Tibial artery (tissue), 4 donors: ENCODE measurements at regions of chr6 and their contacts with region 1.

Region 1: GRCh38 chr6:89483111-89483720 is 50.3 kb downstream of the ANKRD6 start:
- DNase-seq: peak; percentile 28 to 66
- H3K4me3 ChIP-seq: no peak overlapping the region
- H3K27ac ChIP-seq: peak overlapping the region; percentile 70 to 73
- H3K4me1 ChIP-seq: peaks cover 0 to 77% (median 41%) of the 10 kb centered on the region in 4 donors
- H3K27me3 ChIP-seq: no peaks in the 10 kb centered on the region
- CTCF ChIP-seq: no peak

Region 2: DNA sequence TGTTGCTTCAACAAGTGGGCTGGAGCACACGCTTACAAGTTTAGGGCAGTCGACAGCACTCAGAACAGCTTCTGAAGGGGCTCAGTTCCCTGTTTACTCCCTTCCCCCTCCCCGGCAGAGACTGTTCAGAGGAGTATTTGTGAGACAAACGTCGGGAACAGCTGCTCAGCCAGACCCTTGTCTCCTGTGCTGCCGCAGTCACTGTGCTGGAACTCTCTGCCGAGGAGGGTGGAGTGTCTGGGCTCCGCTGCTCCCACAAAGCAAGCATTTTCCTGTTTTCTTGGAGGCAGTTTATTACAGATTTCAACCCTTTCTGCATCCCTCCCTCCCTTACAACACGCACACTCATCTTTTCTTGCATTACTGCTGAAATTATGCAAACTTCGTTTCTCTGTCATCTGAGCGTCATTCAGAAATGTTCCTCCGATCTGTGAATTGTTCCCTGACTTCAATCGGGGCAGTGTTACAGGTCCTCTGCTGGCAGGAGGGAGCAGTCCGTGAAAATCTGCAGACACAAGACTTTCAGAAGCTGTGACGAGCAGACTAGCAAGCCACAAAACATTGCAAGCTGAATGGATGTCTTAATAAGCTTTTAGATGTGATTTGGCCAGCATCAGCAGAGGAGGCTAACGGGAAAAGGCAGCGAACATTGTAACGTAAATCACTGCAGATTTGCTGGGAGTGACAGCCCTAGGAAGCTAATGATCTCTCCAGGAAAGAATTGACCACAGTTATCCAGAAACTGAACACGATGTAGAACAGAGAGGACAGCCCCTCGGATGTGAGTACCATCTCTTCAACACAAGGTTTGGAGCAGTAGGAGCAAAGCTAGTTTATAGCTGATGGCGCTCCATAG is 79.1 kb after region 1 on chr6:
- intact Hi-C with region 1: loop called (anchors 10 kb)
- DNase-seq: no peak
- H3K4me3 ChIP-seq: peak overlapping the region; percentile 47
- H3K27ac ChIP-seq: peak overlapping the region; percentile 66 to 73
- H3K4me1 ChIP-seq: peaks cover 0 to 65% (median 43%) of the 10 kb centered on the region in 4 donors
- H3K27me3 ChIP-seq: no peaks in the 10 kb centered on the region
- CTCF ChIP-seq: peak in 1 of 2 experiments; percentile 8